ENCODE measurements at regions of chr11 and their contacts with region 1.

Region 1: GRCh38 chr11:6377902-6378639 is 12.2 kb upstream of the SMPD1 start:
- DNase-seq: no peak
- H3K4me3 ChIP-seq: no peak overlapping the region
- H3K27ac ChIP-seq: no peak overlapping the region
- H3K4me1 ChIP-seq: peaks cover 0 to 6% (median 2%) of the 10 kb centered on the region in 4 donors
- H3K27me3 ChIP-seq: no peaks in the 10 kb centered on the region
- CTCF ChIP-seq: no peak
- EP300 ChIP-seq: no peak
- POLR2A ChIP-seq: no peak

Region 2: GRCh38 chr11:6285019-6285418 is 93.1 kb before region 1 on chr11:
- intact Hi-C with region 1: no loop called
- DNase-seq: no peak
- H3K4me3 ChIP-seq: no peak overlapping the region
- H3K27ac ChIP-seq: no peak overlapping the region
- H3K4me1 ChIP-seq: no peaks in the 10 kb centered on the region
- H3K27me3 ChIP-seq: peaks cover 0 to 27% (median 0%) of the 10 kb centered on the region in 4 donors
- CTCF ChIP-seq: no peak
- EP300 ChIP-seq: no peak
- POLR2A ChIP-seq: no peak

Region 3: DNA sequence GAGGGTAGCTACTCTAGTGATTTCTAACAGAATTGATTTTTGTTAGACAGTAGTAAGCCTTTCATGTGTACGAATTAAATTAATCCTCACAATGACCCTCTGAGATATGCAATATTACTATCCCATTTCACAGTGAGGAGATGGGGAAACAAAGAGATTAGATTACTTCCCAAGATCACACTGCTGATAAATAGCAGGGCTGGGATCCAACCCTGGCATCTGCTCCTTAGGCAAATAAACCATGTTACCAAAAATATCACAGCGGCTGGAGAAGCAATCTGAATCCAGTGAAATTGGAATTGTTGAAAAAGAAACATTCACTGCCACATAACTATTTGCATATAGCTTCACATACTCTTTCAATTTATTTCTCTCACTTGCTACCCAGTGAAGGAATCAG is 45.0 kb before region 1 on chr11:
- intact Hi-C with region 1: no loop called
- DNase-seq: no peak
- H3K4me3 ChIP-seq: no peak overlapping the region
- H3K27ac ChIP-seq: no peak overlapping the region
- H3K4me1 ChIP-seq: peaks cover 5 to 19% (median 9%) of the 10 kb centered on the region in 4 donors
- H3K27me3 ChIP-seq: no peaks in the 10 kb centered on the region
- CTCF ChIP-seq: no peak
- EP300 ChIP-seq: no peak
- POLR2A ChIP-seq: no peak

Region 4: DNA sequence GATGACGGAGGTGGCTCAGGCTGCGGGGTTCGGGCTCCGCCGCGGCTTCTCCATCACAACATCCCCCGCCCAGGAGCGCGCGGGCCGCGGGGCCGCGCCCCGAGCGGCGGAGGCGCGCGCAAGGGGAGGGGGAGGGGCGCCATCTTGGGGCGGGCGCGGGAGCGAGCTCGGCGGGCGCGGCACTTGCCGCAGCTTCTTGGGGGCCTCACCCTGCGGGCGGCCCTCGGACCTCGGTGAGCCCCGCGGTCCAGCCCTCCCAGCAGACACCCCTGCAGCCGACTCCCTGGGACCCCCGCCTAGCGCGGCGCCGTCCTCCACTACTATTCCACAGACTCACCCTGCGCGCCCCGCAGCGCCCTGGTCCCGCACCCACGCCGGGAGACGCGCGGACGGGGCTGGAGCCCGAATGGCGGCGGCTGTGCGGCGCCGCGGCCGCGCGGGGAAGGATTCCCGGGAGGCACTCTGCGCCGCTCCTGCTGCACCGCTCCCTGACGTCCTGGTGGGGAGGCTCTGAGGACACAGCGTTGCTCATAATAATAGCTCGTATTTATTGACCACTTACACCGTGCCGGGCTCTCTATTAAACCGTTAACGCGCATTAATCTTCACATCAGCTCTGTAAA is 41.0 kb after region 1 on chr11 and contains the start of gene APBB1:
- intact Hi-C with region 1: no loop called
- DNase-seq: no peak
- H3K4me3 ChIP-seq: peak within 1 kb of the TSS; percentile 88 to 92 (median 90)
- H3K27ac ChIP-seq: peak within 1 kb of the TSS; percentile 92 to 95 (median 94)
- H3K4me1 ChIP-seq: peaks cover 21 to 53% (median 41%) of the 10 kb centered on the region in 4 donors
- H3K27me3 ChIP-seq: no peaks in the 10 kb centered on the region
- CTCF ChIP-seq: peak in 2 of 3 experiments; percentile 16 to 40
- EP300 ChIP-seq: no peak
- POLR2A ChIP-seq: peak; percentile 11
- total RNA-seq, gene APBB1: 63.1 to 166 (median 109) TPM

Region 5: GRCh38 chr11:6443269-6444003 is 65.4 kb after region 1 on chr11:
- intact Hi-C with region 1: loop called (anchors 1 kb)
- DNase-seq: no peak
- H3K4me3 ChIP-seq: no peak overlapping the region
- H3K27ac ChIP-seq: no peak overlapping the region
- H3K4me1 ChIP-seq: no peaks in the 10 kb centered on the region
- H3K27me3 ChIP-seq: no peaks in the 10 kb centered on the region
- CTCF ChIP-seq: peak; percentile 79 to 89 (median 87)
- EP300 ChIP-seq: no peak
- POLR2A ChIP-seq: no peak

Region 6: DNA sequence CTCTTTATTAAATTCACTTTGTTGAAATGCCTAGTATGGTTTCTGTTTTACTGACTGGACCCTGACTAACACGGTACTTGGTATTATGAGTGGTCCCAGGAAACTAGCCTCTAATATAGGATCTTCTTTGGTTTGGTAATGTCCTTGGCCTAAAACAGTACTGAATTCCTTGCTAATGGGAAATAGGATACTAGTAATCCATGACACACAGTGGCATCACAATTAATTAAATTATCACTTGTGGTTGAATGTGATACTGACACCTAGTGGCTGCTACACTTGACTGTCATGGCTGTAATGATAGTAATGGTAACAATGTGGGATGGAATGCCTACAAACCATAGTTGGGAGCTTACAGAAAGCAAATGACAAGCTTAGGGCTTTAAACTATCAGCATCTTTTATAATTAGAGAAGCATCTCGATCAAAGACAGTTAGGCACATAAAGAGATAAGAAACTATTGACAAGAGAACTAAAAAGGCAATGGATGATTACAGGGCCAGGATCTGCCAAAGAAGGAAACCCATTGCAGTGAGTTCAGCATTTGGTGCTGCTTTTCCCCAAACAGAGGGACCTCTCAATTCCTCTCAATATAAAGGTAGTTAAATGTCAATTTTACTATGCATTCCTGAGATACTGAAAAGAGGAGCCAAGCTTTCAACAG is 127.6 kb after region 1 on chr11:
- intact Hi-C with region 1: loop called (anchors 5 kb)
- DNase-seq: no peak
- H3K4me3 ChIP-seq: no peak overlapping the region
- H3K27ac ChIP-seq: peak overlapping the region in 1 of 4 donors; percentile 33
- H3K4me1 ChIP-seq: peaks cover 0 to 8% (median 0%) of the 10 kb centered on the region in 4 donors
- H3K27me3 ChIP-seq: no peaks in the 10 kb centered on the region
- CTCF ChIP-seq: peak; percentile 62 to 81 (median 64)
- EP300 ChIP-seq: no peak
- POLR2A ChIP-seq: no peak

Region 7: GRCh38 chr11:6705905-6706535 is 327.9 kb after region 1 on chr11:
- intact Hi-C with region 1: loop called (anchors 10 kb)
- DNase-seq: no peak
- H3K4me3 ChIP-seq: no peak overlapping the region
- H3K27ac ChIP-seq: no peak overlapping the region
- H3K4me1 ChIP-seq: peaks cover 0 to 8% (median 6%) of the 10 kb centered on the region in 4 donors
- H3K27me3 ChIP-seq: no peaks in the 10 kb centered on the region
- CTCF ChIP-seq: peak; percentile 90 to 97 (median 93)
- EP300 ChIP-seq: no peak
- POLR2A ChIP-seq: no peak

Measured in esophagus muscularis mucosa (tissue), 4 donors.